ENCODE measurements at regions of chr21 and their contacts with region 1.

Region 1: DNA sequence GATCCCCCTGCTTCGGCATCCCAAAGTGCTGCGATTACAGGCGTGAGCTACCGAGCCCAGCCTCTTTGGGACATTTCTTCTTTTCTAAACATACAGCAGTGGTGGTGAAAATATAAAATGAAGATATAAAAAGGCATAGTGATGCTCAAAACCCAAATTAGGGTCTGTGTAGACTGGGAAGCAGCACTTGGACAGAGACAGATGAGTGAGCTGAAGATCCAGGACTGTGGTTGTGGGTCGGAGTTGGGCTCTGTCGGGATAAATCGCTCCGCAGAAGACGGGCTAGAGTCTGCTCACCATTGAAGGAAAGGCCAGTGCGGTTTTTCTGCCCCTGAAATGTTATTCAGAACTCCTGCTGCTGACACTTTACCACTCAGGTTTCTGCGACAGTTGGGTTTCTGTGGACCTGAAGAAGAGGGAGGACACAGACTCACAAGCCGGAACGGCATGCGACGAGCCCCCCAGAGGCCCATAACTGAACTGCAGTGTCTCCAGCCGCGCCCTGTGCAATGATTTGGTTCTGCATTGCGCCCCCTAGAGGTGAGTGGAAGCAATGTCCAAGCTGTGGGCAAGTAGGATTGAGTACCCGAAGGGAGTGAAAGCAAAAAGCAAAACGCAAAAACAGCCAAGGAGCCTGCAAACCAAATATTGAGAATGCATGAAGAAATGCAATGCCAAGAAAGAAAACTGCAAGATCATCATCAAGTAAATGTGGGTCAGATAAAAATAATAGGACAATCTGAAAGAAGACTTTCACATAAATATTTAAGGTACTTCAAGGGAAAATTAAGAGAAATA is 66.6 kb downstream of the GABPA start:
- DNase-seq: peak; percentile 77 to 87 (median 83)
- ATAC-seq: peak; percentile 80 to 97 (median 94)
- H3K4me3 ChIP-seq: no peak overlapping the region
- H3K27ac ChIP-seq: no peak overlapping the region
- H3K4me1 ChIP-seq: peaks cover 0 to 10% (median 0%) of the 10 kb centered on the region in 12 donors
- H3K27me3 ChIP-seq: peaks cover 0 to 7% (median 0%) of the 10 kb centered on the region in 9 donors
- CTCF ChIP-seq: peak; percentile 90 to 99 (median 96)
- POLR2A ChIP-seq: no peak

Region 2: DNA sequence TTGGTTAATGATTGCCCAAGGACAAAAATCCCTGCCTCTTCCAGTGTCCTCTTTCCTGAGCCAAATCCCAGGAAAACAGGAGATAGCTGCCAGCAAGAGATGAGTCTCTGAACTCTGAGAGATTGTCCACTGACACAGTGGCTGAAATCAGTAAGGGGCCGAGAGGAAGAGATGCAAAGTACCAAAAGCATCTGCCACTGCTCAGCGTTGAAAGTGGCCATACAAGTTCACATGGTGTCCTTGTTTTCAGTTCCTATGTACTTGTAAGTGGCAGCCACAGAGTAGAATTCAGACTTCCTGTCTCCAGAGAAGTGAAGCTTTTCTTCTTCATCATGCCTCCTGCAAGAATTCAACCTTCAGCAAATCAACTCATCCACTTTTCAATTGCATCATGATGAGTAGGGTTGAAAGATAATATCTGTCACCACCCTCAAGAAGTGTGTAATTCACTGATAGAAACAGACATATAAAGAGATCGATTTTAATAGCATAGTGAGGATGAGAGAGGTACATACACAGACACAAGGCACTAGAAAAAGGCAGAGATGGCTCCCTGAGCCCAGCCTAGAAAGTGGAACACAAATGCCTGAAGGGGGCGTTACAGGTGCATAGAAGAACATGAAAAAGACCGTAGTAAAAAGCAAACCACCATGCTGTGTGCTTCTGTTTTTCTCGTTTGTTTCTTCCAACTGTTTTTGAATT is 379.9 kb before region 1 on chr21:
- intact Hi-C with region 1: loop called in 1 of 10 experiments (anchors 5 kb)
- DNase-seq: no peak
- ATAC-seq: peak in 1 of 4 donors; percentile 42
- H3K4me3 ChIP-seq: no peak overlapping the region
- H3K27ac ChIP-seq: no peak overlapping the region
- H3K4me1 ChIP-seq: peaks cover 0 to 6% (median 0%) of the 10 kb centered on the region in 12 donors
- H3K27me3 ChIP-seq: peaks cover 0 to 3% (median 0%) of the 10 kb centered on the region in 9 donors
- CTCF ChIP-seq: peak in 11 of 12 donors; percentile 23 to 59 (median 38)
- POLR2A ChIP-seq: no peak

Measured in heart left ventricle (tissue), 16 donors.